Transverse colon (tissue), 4 donors: ENCODE measurements at regions of chr3 and their contacts with region 1.

Region 1: GRCh38 chr3:117836296-117836695 is 1126.7 kb downstream of the TUSC7 start:
- DNase-seq: no peak
- H3K4me3 ChIP-seq: no peak overlapping the region
- H3K27ac ChIP-seq: no peak overlapping the region
- H3K4me1 ChIP-seq: no peaks in the 10 kb centered on the region
- H3K27me3 ChIP-seq: no peaks in the 10 kb centered on the region
- CTCF ChIP-seq: no peak
- EP300 ChIP-seq: no peak
- POLR2A ChIP-seq: no peak

Region 2: DNA sequence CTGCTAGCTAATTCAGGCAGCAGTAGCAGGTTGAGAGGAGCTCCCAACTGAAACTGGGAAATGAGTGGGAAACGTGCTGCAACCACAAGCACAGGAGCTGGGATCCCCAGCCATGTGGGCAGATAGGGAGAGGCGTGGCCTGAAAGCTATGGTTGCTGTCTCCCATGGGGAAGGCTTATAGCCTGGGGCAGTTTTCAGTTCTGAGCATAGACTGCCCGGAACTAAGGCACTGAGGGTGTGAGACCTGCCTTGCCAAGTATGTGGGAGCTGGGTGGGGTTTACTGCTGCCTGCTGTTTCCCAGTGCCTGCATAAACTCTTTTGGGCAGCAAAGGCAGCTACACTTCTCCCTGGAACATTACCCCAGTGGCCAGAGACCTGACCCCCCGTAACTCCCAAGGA is 897.2 kb before region 1 on chr3:
- in situ Hi-C with region 1: no loop called
- intact Hi-C with region 1: loop called (anchors 5 kb)
- DNase-seq: peak; percentile 48
- H3K4me3 ChIP-seq: no peak overlapping the region
- H3K27ac ChIP-seq: peak overlapping the region; percentile 58 to 80 (median 74)
- H3K4me1 ChIP-seq: peaks cover 0 to 22% (median 17%) of the 10 kb centered on the region in 4 donors
- H3K27me3 ChIP-seq: no peaks in the 10 kb centered on the region
- CTCF ChIP-seq: no peak
- EP300 ChIP-seq: no peak
- POLR2A ChIP-seq: no peak

Region 3: DNA sequence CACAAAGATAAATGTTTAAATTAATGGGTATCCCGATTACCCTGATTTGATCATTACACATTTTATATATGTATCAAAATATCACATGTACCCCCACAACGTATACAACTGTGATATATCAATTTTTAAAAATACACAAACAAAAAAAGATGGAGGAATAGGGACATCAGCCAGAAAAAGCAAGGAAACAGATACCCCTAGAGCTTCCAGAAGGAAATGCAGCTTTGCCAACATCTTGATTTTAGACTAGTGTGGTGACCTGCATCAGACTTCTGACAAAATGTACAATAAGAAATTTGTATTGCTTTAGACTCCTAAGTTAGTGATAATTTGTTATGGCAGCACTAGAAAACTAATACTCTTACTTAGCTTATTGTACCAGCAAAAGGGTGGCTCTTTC is 642.9 kb before region 1 on chr3:
- in situ Hi-C with region 1: no loop called
- intact Hi-C with region 1: no loop called
- DNase-seq: no peak
- H3K4me3 ChIP-seq: no peak overlapping the region
- H3K27ac ChIP-seq: no peak overlapping the region
- H3K4me1 ChIP-seq: no peaks in the 10 kb centered on the region
- H3K27me3 ChIP-seq: no peaks in the 10 kb centered on the region
- CTCF ChIP-seq: peak in 1 of 5 experiments; percentile 10
- EP300 ChIP-seq: no peak
- POLR2A ChIP-seq: no peak

Region 4: GRCh38 chr3:117671722-117672318 is 164.5 kb before region 1 on chr3:
- in situ Hi-C with region 1: no loop called
- intact Hi-C with region 1: no loop called
- DNase-seq: peak; percentile 6
- H3K4me3 ChIP-seq: no peak overlapping the region
- H3K27ac ChIP-seq: no peak overlapping the region
- H3K4me1 ChIP-seq: no peaks in the 10 kb centered on the region
- H3K27me3 ChIP-seq: no peaks in the 10 kb centered on the region
- CTCF ChIP-seq: no peak
- EP300 ChIP-seq: no peak
- POLR2A ChIP-seq: no peak

Region 5: GRCh38 chr3:118080889-118081288 is 244.6 kb after region 1 on chr3:
- in situ Hi-C with region 1: no loop called
- intact Hi-C with region 1: no loop called
- DNase-seq: no peak
- H3K4me3 ChIP-seq: no peak overlapping the region
- H3K27ac ChIP-seq: no peak overlapping the region
- H3K4me1 ChIP-seq: no peaks in the 10 kb centered on the region
- H3K27me3 ChIP-seq: no peaks in the 10 kb centered on the region
- CTCF ChIP-seq: no peak
- EP300 ChIP-seq: no peak
- POLR2A ChIP-seq: no peak